ENCODE measurements at regions of chr7 and their contacts with region 1.

Region 1: GRCh38 chr7:103344453-103345149 is at the start of gene DNAJC2:
- DNase-seq: peak; percentile 74 to 95 (median 78)
- ATAC-seq: peak; percentile 86
- H3K4me3 ChIP-seq: peak within 1 kb of the TSS; percentile 94
- H3K4me3 Mint-ChIP-seq: peak within 1 kb of the TSS; percentile 97
- H3K27ac ChIP-seq: peak within 1 kb of the TSS; percentile 73 to 82
- H3K27ac Mint-ChIP-seq: peak within 1 kb of the TSS; percentile 85
- H3K4me1 ChIP-seq: peaks cover 28% of the 10 kb centered on the region
- H3K4me1 Mint-ChIP-seq: peaks cover 76% of the 10 kb centered on the region
- H3K27me3 ChIP-seq: no peaks in the 10 kb centered on the region
- H3K27me3 Mint-ChIP-seq: no peaks in the 10 kb centered on the region
- CTCF ChIP-seq: no peak
- total RNA-seq, gene DNAJC2: 72.0 to 77.4 TPM

Region 2: DNA sequence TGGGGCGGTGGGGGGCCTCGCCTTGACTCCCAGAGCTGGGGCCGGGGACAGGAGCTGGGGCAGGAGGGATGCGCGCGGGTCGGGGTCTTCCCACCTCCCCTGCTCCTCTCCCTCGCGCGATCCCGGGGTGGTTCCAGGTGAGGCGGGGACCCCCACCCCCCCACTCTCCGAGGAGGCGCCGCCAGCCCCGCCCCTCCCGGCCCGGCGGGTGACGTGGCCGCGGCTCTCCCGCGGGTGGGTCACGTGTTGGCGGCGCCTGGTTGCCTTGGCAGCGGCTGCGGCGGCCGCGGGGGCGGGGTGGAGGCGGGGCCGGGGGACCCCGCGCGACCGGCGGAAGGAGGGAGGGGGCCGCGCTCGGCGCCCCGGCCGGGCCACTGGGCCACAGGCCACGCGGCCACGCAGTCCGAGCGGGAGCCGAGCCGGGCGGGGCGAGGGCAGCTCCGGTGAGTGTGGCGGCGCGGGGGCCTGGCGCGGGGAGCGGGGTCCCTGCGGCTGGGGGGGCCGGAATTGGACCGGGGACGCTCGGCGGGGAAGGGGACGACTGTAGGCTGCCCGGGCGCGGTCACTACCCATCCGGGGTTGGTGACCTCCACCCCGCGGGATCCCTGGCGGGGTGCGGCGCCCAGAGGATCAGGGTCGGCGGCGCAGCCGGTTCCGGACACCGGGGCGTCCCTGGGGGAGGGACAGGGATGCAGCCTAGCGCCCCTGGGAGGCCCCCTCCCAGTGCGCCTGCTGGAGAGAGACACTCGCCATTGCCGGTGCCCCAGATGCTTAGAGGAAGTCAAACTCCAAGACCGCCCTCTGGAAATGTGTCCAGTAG is 911.2 kb before region 1 on chr7 and contains the start of gene ORAI2:
- CTCF ChIA-PET with region 1: no interaction called
- POLR2A ChIA-PET with region 1: no interaction called
- intact Hi-C with region 1: no loop called
- DNase-seq: peak; percentile 71 to 93 (median 87)
- ATAC-seq: peak; percentile 56
- H3K4me3 ChIP-seq: peak within 1 kb of the TSS; percentile 79
- H3K4me3 Mint-ChIP-seq: peak within 1 kb of the TSS; percentile 94
- H3K27ac ChIP-seq: peak within 1 kb of the TSS; percentile 92 to 95
- H3K27ac Mint-ChIP-seq: peak within 1 kb of the TSS; percentile 100
- H3K4me1 ChIP-seq: peaks cover 68% of the 10 kb centered on the region
- H3K4me1 Mint-ChIP-seq: peaks cover 47% of the 10 kb centered on the region
- H3K27me3 ChIP-seq: no peaks in the 10 kb centered on the region
- H3K27me3 Mint-ChIP-seq: no peaks in the 10 kb centered on the region
- CTCF ChIP-seq: no peak
- total RNA-seq, gene ORAI2: 12.3 to 16.5 TPM

Region 3: DNA sequence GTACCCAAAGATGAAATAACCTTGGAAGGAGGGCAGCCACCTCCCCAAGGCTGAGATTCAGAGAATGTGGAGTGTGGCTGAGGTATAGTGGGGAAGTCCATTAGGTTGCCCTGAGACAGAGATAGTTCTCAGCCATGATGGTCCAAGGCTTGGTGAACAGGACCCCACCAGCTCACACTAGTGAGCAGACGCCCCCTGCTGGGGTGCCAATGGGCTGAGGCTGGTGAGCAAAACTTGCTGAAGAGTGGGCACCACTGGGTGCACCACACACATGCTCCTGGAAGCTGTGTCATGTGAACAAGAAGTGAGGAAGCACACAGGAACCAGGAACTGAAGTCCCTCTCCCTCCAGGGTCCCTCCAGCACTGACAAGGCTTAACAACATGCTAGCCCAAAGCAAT is 278.9 kb before region 1 on chr7:
- CTCF ChIA-PET with region 1: no interaction called
- POLR2A ChIA-PET with region 1: no interaction called
- intact Hi-C with region 1: no loop called
- DNase-seq: peak in 10 of 14 experiments; percentile 7 to 58 (median 30)
- ATAC-seq: no peak
- H3K4me3 ChIP-seq: no peak overlapping the region
- H3K4me3 Mint-ChIP-seq: no peak overlapping the region
- H3K27ac ChIP-seq: no peak overlapping the region
- H3K27ac Mint-ChIP-seq: no peak overlapping the region
- H3K4me1 ChIP-seq: no peaks in the 10 kb centered on the region
- H3K4me1 Mint-ChIP-seq: no peaks in the 10 kb centered on the region
- H3K27me3 ChIP-seq: no peaks in the 10 kb centered on the region
- H3K27me3 Mint-ChIP-seq: no peaks in the 10 kb centered on the region
- CTCF ChIP-seq: no peak

Region 4: DNA sequence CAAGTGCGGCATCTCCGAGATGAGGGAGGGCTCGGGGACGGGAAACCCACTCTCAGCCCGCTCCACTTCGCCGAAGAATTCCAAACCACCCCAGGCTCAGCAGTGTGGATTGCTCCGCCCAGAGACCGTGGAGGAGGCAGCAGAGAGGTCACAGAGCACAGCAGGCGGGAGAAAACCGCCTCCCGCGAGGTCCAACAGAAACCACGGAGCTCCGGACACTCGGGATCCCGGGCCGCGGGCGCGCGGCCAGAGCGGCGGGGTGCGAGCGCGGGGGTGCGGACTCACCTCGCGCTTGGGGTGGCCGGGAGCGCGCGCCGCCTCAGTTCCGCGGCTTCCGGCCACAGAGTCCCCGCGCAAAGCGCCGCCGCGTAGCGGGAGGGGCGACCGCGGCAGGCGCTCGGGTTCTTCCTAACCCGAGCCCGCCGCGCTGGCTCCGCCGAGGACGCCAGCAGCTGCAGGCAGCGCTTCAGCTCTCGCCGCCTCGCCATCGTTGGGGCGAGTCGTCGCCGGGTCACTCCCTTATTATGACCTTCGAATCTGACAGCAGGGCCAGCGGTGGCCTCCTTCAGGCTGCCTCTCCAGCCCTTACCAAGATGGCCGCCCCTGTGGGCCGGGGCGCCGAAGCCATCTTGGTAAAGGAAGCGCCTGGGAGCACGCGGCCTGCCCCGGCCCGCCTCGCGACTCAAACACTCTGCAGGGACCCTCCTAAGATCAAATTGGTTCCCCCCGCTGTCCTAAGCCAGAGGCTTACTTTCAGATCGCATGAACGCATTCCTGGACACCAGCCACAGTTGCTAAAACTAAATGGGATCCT is 195.4 kb before region 1 on chr7 and contains the start of gene NAPEPLD:
- CTCF ChIA-PET with region 1: no interaction called
- POLR2A ChIA-PET with region 1: interaction called, 6 read pairs
- intact Hi-C with region 1: loop called in 1 of 2 experiments (anchors 5 kb)
- DNase-seq: peak; percentile 47 to 89 (median 67)
- ATAC-seq: peak; percentile 86
- H3K4me3 ChIP-seq: peak within 1 kb of the TSS; percentile 70
- H3K4me3 Mint-ChIP-seq: peak within 1 kb of the TSS; percentile 97
- H3K27ac ChIP-seq: peak within 1 kb of the TSS; percentile 67 to 72
- H3K27ac Mint-ChIP-seq: peak within 1 kb of the TSS; percentile 90
- H3K4me1 ChIP-seq: peaks cover 10% of the 10 kb centered on the region
- H3K4me1 Mint-ChIP-seq: peaks cover 51% of the 10 kb centered on the region
- H3K27me3 ChIP-seq: no peaks in the 10 kb centered on the region
- H3K27me3 Mint-ChIP-seq: no peaks in the 10 kb centered on the region
- CTCF ChIP-seq: no peak
- total RNA-seq, gene NAPEPLD: 1.5 to 1.7 TPM

Region 5: DNA sequence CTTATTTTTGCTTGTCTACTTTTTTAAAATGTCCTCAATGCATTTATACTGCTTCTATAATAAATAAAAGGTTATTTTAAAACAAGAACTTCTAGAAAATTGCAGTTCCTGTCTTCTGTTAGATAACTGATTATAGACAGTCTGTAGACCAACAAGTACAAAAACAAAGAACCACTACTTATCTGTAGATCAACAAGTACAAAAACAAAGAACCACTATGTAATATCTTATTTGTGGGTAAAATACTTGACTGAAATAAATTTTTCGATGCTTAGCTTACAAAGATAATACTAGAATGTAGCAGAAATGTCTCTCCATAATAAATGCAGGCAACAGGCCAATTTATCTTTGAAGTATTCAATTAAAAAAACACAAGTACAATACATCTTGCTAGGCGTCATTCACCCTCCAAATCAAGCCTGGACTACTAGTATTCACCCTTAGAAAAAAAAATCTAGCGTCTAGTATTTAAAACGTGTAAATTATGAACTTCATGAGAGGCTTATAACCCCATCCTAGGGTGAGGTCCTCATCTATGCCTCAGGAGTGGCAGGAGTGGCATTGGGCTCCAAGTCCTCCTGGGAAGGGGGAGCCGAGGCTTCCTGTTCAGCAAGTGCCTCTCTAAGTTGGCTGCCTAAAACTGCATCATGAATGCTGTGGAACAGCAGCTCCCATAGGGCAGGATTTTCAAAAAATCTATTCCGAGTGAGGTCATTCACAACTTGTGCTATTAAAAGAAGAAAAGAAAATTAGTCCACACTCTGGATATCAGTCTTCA is 29.5 kb after region 1 on chr7:
- CTCF ChIA-PET with region 1: no interaction called
- POLR2A ChIA-PET with region 1: no interaction called
- intact Hi-C with region 1: no loop called
- DNase-seq: no peak
- ATAC-seq: no peak
- H3K4me3 ChIP-seq: no peak overlapping the region
- H3K4me3 Mint-ChIP-seq: no peak overlapping the region
- H3K27ac ChIP-seq: no peak overlapping the region
- H3K27ac Mint-ChIP-seq: no peak overlapping the region
- H3K4me1 ChIP-seq: no peaks in the 10 kb centered on the region
- H3K4me1 Mint-ChIP-seq: peaks cover 6% of the 10 kb centered on the region
- H3K27me3 ChIP-seq: no peaks in the 10 kb centered on the region
- H3K27me3 Mint-ChIP-seq: peaks cover 3% of the 10 kb centered on the region
- CTCF ChIP-seq: no peak

Region 6: DNA sequence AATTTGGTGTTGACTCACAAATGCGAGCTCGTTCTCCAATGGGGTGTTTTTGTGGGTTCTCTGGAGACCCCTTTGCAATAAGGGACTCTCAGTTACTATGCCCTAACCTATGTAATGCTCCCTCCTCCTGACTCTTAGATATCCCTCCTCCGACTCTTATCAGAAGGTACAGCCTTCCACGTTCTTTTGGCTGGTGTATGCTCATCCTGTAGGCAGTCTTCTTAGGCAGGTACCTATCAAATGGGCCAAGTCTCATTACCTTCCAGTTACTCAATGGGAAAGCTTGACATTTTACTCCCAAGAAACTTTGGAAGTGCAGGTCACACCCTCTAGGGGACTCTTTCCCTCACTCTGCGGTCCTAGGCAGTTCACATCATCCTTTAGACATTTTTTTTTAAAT is 68.8 kb after region 1 on chr7:
- CTCF ChIA-PET with region 1: no interaction called
- POLR2A ChIA-PET with region 1: no interaction called
- intact Hi-C with region 1: no loop called
- DNase-seq: no peak
- ATAC-seq: no peak
- H3K4me3 ChIP-seq: no peak overlapping the region
- H3K4me3 Mint-ChIP-seq: no peak overlapping the region
- H3K27ac ChIP-seq: no peak overlapping the region
- H3K27ac Mint-ChIP-seq: no peak overlapping the region
- H3K4me1 ChIP-seq: no peaks in the 10 kb centered on the region
- H3K4me1 Mint-ChIP-seq: no peaks in the 10 kb centered on the region
- H3K27me3 ChIP-seq: peaks cover 0 to 3% of the 10 kb centered on the region in 2 experiments
- H3K27me3 Mint-ChIP-seq: peaks cover 12% of the 10 kb centered on the region
- CTCF ChIP-seq: no peak

Region 7: DNA sequence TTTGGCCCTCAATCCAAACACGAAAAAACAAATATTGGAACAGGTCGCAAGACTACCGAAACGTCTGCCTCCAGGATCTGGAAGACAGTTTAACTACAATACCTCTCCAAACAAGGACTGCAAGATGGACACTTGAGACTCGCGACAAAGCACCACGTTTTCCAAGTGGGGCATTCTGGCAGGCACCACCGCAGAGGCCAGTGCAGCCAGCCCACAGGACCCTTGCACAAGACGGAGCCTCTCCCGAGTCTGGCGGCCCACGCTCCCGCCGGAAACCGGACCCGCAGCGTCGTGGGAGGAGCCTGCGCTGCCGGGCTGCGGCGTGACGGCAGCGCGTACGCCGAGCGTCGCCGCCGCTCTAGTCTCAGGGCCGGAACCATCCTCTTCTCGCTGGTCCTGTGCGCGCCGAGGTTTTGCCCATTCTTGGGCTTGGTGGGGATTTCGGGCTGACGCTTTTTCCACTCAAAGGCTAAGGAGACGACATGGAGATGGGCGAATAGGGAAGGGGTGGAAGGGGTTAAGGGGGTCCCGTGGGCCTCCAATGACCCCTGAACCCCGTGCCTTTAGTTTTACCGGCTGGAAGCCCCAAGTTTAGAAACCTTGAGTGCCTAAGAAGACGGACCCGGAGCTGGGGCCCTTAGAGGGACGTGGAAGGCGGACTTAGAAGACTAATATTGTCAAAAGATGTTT is 863.3 kb after region 1 on chr7 and contains the start of gene ORC5:
- CTCF ChIA-PET with region 1: no interaction called
- POLR2A ChIA-PET with region 1: no interaction called
- intact Hi-C with region 1: loop called in 1 of 2 experiments (anchors 5 kb)
- DNase-seq: peak; percentile 53 to 89 (median 66)
- ATAC-seq: peak; percentile 97
- H3K4me3 ChIP-seq: peak within 1 kb of the TSS; percentile 92
- H3K4me3 Mint-ChIP-seq: peak within 1 kb of the TSS; percentile 97
- H3K27ac ChIP-seq: peak within 1 kb of the TSS; percentile 58 to 77
- H3K27ac Mint-ChIP-seq: peak within 1 kb of the TSS; percentile 94
- H3K4me1 ChIP-seq: peaks cover 20% of the 10 kb centered on the region
- H3K4me1 Mint-ChIP-seq: peaks cover 46% of the 10 kb centered on the region
- H3K27me3 ChIP-seq: no peaks in the 10 kb centered on the region
- H3K27me3 Mint-ChIP-seq: peaks cover 17% of the 10 kb centered on the region
- CTCF ChIP-seq: no peak
- total RNA-seq, gene ORC5: 7.7 to 9.3 TPM

Measured in CD4-positive, alpha-beta T cell (primary cell).